Heart left ventricle (tissue), 16 donors: ENCODE measurements at regions of chr1 and their contacts with region 1.

Region 1: DNA sequence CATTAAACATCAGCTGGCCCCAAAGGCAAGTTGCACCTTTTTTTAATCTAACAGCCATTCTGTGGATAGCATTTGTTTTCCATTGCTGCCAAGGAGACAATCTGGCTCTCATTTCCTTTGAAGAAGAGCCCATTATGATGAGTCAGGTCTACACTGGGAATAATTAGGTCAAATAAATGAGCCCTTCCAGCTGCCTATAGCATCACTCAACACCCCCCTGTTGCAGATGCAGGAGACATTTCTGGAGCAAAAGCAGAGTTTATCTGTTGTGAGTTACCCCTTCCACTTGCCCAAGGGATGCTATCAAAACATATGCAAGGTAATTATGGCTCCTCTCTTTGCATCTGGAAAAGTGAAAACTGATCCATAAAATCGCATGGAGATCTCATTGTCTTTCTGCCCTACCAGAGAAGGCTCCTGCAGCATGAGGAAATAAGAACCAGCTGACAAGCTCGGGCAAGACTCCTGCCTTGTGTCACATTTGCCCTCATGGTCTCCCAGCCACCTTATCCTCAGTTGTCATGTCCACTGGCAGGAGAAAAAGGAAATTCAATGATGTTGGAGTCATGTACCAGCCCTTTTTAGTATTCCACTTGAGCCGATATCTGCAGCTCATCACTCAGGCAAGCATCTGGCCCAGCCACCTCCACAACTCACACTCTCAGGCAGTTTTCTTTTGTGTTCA is 135.9 kb downstream of the SLC30A10 start:
- DNase-seq: no peak
- ATAC-seq: peak; percentile 55 to 89 (median 71)
- H3K4me3 ChIP-seq: no peak overlapping the region
- H3K27ac ChIP-seq: peak overlapping the region in 2 of 12 donors; percentile 3 to 4
- H3K4me1 ChIP-seq: peaks cover 0 to 23% (median 11%) of the 10 kb centered on the region in 12 donors
- H3K27me3 ChIP-seq: no peaks in the 10 kb centered on the region
- CTCF ChIP-seq: no peak
- POLR2A ChIP-seq: no peak

Region 2: GRCh38 chr1:219492717-219493116 is 299.8 kb before region 1 on chr1:
- intact Hi-C with region 1: no loop called
- DNase-seq: no peak
- ATAC-seq: no peak
- H3K4me3 ChIP-seq: no peak overlapping the region
- H3K27ac ChIP-seq: no peak overlapping the region
- H3K4me1 ChIP-seq: no peaks in the 10 kb centered on the region
- H3K27me3 ChIP-seq: no peaks in the 10 kb centered on the region
- CTCF ChIP-seq: no peak
- POLR2A ChIP-seq: no peak

Region 3: DNA sequence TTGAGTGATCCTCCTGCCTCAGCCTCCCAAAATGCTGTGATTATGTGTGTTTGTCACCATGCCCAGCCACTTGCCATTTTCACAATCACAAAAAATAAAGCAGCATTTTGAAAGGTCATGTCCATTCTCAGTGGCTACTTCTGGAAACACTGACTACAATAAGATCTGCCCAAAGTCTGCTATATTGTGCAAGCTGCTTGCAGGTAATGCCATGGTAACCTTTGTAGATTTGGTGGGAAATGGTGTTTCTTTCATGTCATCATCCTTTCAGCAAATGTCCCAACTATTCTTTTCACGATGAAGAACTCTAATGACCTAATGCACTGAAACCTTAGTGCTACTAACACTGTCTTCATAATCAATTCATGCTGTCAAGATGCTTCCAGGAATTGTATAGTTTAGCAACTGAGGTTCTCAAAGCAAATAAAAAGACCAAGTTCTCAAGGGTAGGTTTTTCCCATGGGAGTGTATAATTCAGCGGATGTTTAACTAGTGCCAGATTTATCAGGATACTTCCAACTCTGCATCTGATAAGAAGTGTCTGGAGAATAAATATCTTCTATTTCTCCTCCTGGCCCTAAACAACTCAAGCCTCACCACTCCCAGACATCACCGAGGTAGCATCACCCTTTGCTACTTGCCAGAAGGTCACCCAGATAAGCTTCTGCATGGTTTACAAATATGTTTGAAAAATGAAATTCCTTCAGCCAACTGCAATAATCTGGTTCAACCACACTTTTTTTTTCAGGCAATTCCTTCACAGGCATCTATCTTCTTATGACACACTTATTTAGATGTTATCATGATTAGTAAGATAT is 47.6 kb before region 1 on chr1:
- intact Hi-C with region 1: loop called in 2 of 10 experiments (anchors 5 kb)
- DNase-seq: no peak
- ATAC-seq: no peak
- H3K4me3 ChIP-seq: no peak overlapping the region
- H3K27ac ChIP-seq: no peak overlapping the region
- H3K4me1 ChIP-seq: peaks cover 0 to 26% (median 3%) of the 10 kb centered on the region in 12 donors
- H3K27me3 ChIP-seq: no peaks in the 10 kb centered on the region
- CTCF ChIP-seq: no peak
- POLR2A ChIP-seq: no peak

Region 4: GRCh38 chr1:219824338-219824737 is 31.9 kb after region 1 on chr1:
- intact Hi-C with region 1: no loop called
- DNase-seq: no peak
- ATAC-seq: no peak
- H3K4me3 ChIP-seq: no peak overlapping the region
- H3K27ac ChIP-seq: no peak overlapping the region
- H3K4me1 ChIP-seq: no peaks in the 10 kb centered on the region
- H3K27me3 ChIP-seq: no peaks in the 10 kb centered on the region
- CTCF ChIP-seq: no peak
- POLR2A ChIP-seq: no peak